Gastrocnemius medialis (tissue), 4 donors: ENCODE measurements at regions of chr7 and their contacts with region 1.

Region 1: GRCh38 chr7:21454182-21454581 is 26.3 kb downstream of the SP4 start:
- DNase-seq: no peak
- ATAC-seq: no peak
- H3K4me3 ChIP-seq: no peak overlapping the region
- H3K27ac ChIP-seq: no peak overlapping the region
- H3K4me1 ChIP-seq: peaks cover 12 to 15% of the 10 kb centered on the region in 2 donors
- H3K27me3 ChIP-seq: no peaks in the 10 kb centered on the region
- CTCF ChIP-seq: no peak
- POLR2A ChIP-seq: no peak

Region 2: GRCh38 chr7:21338728-21339164 is 115.4 kb before region 1 on chr7:
- in situ Hi-C with region 1: no loop called
- intact Hi-C with region 1: no loop called
- DNase-seq: no peak
- ATAC-seq: no peak
- H3K4me3 ChIP-seq: no peak overlapping the region
- H3K27ac ChIP-seq: no peak overlapping the region
- H3K4me1 ChIP-seq: no peaks in the 10 kb centered on the region
- H3K27me3 ChIP-seq: no peaks in the 10 kb centered on the region
- CTCF ChIP-seq: no peak
- POLR2A ChIP-seq: no peak

Region 3: DNA sequence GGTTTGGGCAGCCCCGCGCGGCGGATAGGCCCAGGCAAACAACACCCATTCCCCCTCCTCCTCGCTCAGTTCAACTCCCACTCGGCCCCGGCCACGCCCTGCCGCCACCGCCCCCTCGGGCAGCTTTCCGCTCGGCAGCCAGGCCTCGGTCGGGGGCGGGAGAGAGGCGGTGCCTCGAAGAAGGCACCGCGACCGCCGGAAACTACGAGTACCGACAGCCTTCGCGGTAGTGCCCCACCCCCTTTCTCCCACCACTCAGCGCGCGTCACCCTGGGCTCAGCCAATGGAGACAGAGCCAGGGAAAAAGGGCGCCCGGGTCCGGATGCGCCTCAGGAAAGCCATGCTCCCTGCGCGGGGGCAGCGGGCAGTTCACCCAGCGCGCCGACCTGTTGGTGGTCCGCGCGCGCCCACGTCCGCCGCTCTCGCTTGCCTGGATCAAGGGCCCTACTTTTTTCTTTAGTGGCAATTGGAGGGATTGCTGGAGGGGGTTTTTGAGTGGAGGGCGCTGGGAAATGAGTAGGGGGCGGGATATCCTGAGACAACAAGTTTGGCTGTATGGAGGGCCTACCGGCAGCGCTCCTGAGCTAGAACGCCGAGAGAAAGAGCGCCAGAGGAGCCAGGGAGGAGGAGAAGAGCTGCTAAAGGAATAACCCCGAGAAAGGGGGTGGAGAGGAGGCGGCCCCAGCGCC is 26.9 kb before region 1 on chr7:
- in situ Hi-C with region 1: no loop called
- intact Hi-C with region 1: loop called (anchors 2 kb)
- DNase-seq: peak; percentile 98 to 99
- ATAC-seq: peak; percentile 86
- H3K4me3 ChIP-seq: peak overlapping the region; percentile 66 to 96 (median 88)
- H3K27ac ChIP-seq: peak overlapping the region; percentile 92 to 100 (median 100)
- H3K4me1 ChIP-seq: peaks cover 37 to 42% of the 10 kb centered on the region in 2 donors
- H3K27me3 ChIP-seq: no peaks in the 10 kb centered on the region
- CTCF ChIP-seq: peak in 4 of 5 experiments; percentile 4 to 56 (median 28)
- POLR2A ChIP-seq: peak in 1 of 2 donors; percentile 76